Caco-2 (cell line): ENCODE measurements at regions of chr11 and their contacts with region 1.

Region 1: GRCh38 chr11:116986521-116987105 is 111.6 kb downstream of the SIK3 start:
- DNase-seq: no peak
- H3K4me3 ChIP-seq: no peak overlapping the region
- H3K4me3 Mint-ChIP-seq: no peak overlapping the region
- H3K27ac Mint-ChIP-seq: no peak overlapping the region
- H3K4me1 ChIP-seq: peaks cover 49% of the 10 kb centered on the region
- H3K4me1 Mint-ChIP-seq: peaks cover 47% of the 10 kb centered on the region
- H3K27me3 ChIP-seq: no peaks in the 10 kb centered on the region
- H3K27me3 Mint-ChIP-seq: no peaks in the 10 kb centered on the region
- CTCF ChIP-seq: no peak

Region 2: GRCh38 chr11:116808386-116809194 is 178.0 kb before region 1 on chr11:
- CTCF ChIA-PET with region 1: no interaction called
- POLR2A ChIA-PET with region 1: no interaction called
- intact Hi-C with region 1: no loop called
- DNase-seq: peak; percentile 94 to 96
- H3K4me3 ChIP-seq: 0 out of 2 replicates have a peak overlapping the region, but pooled peaks have one; percentile 4
- H3K4me3 Mint-ChIP-seq: peak overlapping the region; percentile 67
- H3K27ac Mint-ChIP-seq: peak overlapping the region; percentile 98
- H3K4me1 ChIP-seq: peaks cover 70% of the 10 kb centered on the region
- H3K4me1 Mint-ChIP-seq: peaks cover 69% of the 10 kb centered on the region
- H3K27me3 ChIP-seq: no peaks in the 10 kb centered on the region
- H3K27me3 Mint-ChIP-seq: no peaks in the 10 kb centered on the region
- CTCF ChIP-seq: no peak

Region 3: DNA sequence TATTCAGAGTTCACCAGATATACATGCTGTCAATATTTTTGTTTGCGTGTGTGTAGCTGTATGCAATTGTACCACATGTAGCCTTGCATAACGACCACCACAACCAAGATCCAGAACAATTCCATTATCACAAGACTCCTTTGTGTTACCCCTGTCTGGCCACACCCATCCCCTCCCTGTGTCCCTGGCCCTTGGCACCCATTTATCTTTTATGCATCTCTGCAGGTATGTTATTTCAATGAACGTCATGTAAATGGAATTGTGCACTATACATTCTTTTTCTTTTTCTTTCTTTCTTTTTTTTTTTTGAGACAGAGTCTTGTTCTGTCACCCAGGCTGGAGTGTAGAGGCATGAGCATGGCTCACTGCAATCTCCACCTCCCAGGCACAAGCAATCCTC is 147.8 kb after region 1 on chr11:
- CTCF ChIA-PET with region 1: no interaction called
- POLR2A ChIA-PET with region 1: interaction called, 12 read pairs
- intact Hi-C with region 1: no loop called
- DNase-seq: no peak
- H3K4me3 ChIP-seq: no peak overlapping the region
- H3K4me3 Mint-ChIP-seq: no peak overlapping the region
- H3K27ac Mint-ChIP-seq: no peak overlapping the region
- H3K4me1 ChIP-seq: no peaks in the 10 kb centered on the region
- H3K4me1 Mint-ChIP-seq: no peaks in the 10 kb centered on the region
- H3K27me3 ChIP-seq: no peaks in the 10 kb centered on the region
- H3K27me3 Mint-ChIP-seq: no peaks in the 10 kb centered on the region
- CTCF ChIP-seq: no peak